Astrocyte of the cerebellum (primary cell): ENCODE measurements at regions of chr15 and their contacts with region 1.

Region 1: DNA sequence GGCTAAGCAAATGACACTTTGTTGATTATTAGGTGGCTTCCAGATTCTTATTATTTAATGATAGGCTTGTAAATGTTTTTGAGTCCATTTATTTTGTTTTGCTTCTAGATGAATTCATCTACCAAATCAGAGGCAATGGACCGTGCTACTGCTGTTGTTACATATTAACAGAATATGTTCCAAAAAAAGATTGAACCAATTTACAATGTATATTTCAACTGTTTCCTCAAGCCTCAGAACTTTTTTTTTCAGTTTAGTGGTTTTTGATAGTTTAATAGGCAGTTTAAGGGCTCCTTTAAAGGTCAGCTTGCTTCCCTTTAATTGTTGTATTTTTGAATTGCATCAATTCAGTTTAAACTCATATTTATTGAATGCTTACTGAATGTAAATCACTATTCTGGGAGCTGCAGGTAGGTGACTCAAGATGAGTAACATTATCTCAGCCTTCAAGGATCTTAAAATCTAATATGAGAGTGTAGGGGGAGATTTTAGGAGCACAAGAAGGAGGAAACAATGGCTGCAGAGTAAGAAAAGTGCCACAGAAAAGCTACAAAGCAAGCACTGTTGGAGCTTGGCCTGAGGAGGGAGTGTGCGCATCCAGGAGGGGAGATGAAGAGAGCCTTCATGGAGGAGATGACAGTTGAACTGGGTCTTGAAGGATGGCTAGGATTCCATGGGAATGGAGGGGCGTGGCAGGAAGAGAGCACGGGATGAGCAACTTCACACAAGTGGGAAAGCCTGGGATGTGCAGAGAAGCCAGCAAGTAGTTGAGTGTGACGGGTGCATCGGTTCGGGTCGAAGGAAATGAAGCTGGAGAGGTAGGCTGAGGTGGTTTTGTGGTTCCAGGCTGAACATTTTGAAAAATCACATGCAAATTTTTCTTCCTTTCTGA is 14.7 kb downstream of the MAP2K1 start:
- DNase-seq: no peak
- H3K4me3 ChIP-seq: no peak overlapping the region
- CTCF ChIP-seq: peak; percentile 4

Region 2: DNA sequence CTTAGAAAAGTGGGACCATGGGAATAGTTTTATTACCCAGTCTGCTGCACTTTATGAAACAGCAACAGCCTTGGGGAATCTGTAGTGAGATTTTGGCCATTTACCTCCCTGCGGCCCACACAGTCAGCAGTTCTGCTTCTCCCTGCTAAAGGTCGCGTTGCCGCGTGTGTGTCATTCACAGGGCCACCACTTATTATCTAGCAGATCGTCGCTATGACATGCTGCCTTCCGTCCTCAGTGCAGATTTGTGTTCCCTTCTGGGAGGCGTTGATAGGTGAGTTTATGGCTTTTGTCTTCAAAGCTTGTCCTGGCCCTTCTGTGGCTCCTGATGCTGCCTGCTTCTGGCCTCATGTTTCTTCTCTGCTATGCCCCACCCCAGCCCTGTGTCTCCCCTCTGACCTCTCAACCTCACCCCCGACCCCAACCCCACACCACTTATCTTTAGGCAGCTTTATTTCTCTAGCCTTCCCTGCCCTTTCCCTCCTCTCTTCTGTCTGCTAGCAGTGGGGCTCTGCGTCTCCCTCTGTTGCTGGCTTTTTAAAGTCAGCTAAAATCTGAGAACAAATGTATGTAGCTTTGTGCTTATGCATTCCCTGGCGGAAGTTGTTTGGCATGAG is 78.0 kb before region 1 on chr15:
- in situ Hi-C with region 1: loop called (anchors 25 kb)
- DNase-seq: no peak
- H3K4me3 ChIP-seq: no peak overlapping the region
- CTCF ChIP-seq: no peak

Region 3: GRCh38 chr15:66476535-66476934 is 75.2 kb after region 1 on chr15:
- in situ Hi-C with region 1: loop called (anchors 5 kb)
- DNase-seq: no peak
- H3K4me3 ChIP-seq: no peak overlapping the region
- CTCF ChIP-seq: no peak